Esophagus muscularis mucosa (tissue), 4 donors: ENCODE measurements at regions of chr17 and their contacts with region 1.

Region 1: GRCh38 chr17:54968262-54968987 is at the starts of genes COX11 and STXBP4:
- DNase-seq: peak; percentile 97
- H3K4me3 ChIP-seq: peak within 1 kb of the TSS; percentile 88 to 95 (median 92)
- H3K27ac ChIP-seq: peak within 1 kb of the TSS; percentile 88 to 94 (median 92)
- H3K4me1 ChIP-seq: peaks cover 22 to 45% (median 42%) of the 10 kb centered on the region in 4 donors
- H3K27me3 ChIP-seq: no peaks in the 10 kb centered on the region
- CTCF ChIP-seq: peak in 2 of 3 experiments; percentile 44 to 52
- EP300 ChIP-seq: no peak
- POLR2A ChIP-seq: no peak
- total RNA-seq, gene COX11: 63.0 to 96.4 (median 79.8) TPM
- total RNA-seq, gene STXBP4: 15.4 to 22.6 (median 19.8) TPM

Region 2: DNA sequence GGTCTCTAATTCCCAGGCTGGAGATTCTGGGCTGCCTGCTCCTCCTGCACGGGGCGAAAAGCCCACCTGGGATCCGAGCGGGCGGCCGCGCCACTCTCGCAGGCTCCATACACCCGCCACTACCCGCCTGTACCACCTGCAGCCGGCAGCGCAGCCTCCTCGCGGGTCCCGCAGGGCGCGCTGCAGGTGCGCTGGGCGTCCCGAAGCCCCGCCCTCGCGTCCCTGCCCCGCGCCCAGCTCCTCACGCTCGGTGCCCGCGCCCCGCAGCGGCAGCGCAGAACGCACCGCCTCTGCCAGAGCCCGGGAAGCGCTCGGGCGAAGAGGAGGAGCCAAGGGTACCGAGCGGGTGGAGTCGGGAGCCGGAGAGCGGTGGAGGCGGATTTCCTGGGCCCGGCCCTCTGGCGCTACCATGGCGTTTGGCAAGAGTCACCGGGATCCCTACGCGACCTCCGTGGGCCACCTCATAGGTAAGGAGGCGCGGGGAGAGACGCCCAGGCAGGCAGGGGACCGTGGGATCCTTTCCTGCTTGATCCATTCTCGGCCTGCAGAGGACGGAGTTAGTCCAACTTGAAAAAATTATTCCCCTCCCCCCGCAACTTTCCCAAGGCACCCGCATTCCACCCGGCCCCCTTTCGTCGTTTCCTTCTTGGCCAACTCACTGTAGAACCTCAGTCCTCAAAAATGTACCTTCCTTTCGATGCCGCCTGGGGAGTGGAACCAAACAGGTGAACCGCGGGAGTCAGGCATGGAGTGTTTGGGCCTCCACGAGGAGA is 67.8 kb before region 1 on chr17 and contains the start of gene TOM1L1:
- intact Hi-C with region 1: loop called (anchors 2 kb)
- DNase-seq: no peak
- H3K4me3 ChIP-seq: peak within 1 kb of the TSS; percentile 59 to 68 (median 66)
- H3K27ac ChIP-seq: peak within 1 kb of the TSS; percentile 5 to 65 (median 51)
- H3K4me1 ChIP-seq: peaks cover 4 to 23% (median 11%) of the 10 kb centered on the region in 4 donors
- H3K27me3 ChIP-seq: peaks cover 0 to 7% (median 0%) of the 10 kb centered on the region in 4 donors
- CTCF ChIP-seq: peak in 2 of 3 experiments; percentile 11 to 12
- EP300 ChIP-seq: no peak
- POLR2A ChIP-seq: no peak
- total RNA-seq, gene TOM1L1: 25.8 to 40.7 (median 28.6) TPM